Astrocyte of the spinal cord (primary cell): ENCODE measurements at regions of chr11 and their contacts with region 1.

Region 1: DNA sequence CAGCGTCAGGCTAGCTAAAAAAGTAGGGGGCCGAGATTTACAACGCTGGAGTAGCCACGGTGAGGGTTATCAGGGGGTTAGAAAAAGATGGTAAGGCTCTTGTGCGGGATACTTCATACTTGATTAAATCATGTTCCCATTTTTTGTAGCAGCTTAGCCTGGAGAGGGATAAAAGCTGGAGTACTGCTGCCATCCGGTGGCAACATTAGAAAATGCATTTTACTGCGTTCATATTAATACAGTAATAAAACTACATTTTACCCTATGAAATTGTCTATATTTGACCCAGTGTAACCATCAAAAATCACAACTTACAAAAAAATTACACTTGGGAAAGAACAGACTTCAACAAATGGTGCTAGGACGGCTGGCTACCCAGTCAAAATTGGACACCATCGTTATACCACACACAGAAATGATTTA is 17.3 kb downstream of the RPUSD4 start:
- DNase-seq: peak; percentile 45
- H3K4me3 ChIP-seq: no peak overlapping the region
- CTCF ChIP-seq: peak; percentile 52

Region 2: GRCh38 chr11:125887373-125888324 is 306.5 kb before region 1 on chr11 and contains the start of gene HYLS1:
- in situ Hi-C with region 1: no loop called
- DNase-seq: peak; percentile 99
- H3K4me3 ChIP-seq: peak within 1 kb of the TSS; percentile 63
- CTCF ChIP-seq: peak; percentile 11

Region 3: DNA sequence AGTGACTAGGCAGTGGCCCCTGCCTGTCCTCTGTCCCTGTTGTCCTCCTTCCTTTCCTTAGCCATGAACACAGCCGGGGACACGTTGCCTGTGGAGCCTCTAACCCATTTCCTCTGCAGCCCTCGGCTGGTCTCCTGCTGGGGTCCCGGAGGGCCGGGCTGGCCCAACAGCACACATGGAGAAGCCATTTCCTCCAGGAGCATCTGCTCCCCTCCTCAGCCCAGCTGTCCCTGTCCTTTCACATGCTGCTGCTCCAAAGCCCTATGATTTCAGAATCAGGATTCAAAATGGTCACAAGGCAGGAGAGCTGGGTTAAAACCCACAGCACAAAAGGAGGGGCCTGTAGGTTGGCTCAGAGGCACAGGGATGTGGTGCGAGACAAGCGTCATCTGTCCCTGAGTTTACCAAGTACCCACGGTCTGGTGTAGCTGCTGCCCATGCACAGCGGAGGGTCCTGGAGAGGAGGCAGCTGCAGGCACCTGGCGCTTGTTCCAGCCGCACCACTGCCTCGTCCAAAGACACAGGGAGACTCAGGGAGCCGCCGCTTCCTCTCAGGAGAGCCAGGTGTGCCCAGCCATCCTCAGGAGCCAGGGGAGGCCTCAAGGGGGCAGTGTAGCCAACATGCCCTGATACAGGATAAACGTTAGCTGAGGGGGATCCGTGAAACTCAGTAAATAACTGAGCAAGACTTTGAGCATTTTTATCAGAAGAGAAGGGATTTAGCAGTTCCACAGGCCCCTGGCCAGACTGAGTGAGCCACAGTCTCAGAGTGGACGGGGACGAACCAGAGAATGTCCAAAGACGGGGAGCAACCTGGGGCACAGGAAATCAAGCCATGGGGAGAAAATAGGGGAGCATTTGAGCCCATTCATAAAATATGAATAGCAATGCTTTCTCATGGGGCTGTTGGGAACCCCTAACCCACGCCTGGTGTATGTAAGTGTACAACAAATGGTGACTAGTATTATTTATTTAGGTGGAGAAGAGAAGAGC is 252.2 kb before region 1 on chr11:
- in situ Hi-C with region 1: loop called (anchors 25 kb)
- DNase-seq: peak; percentile 10
- H3K4me3 ChIP-seq: no peak overlapping the region
- CTCF ChIP-seq: peak; percentile 84

Region 4: GRCh38 chr11:126359431-126360416 is 165.6 kb after region 1 on chr11:
- in situ Hi-C with region 1: no loop called
- DNase-seq: peak; percentile 33
- H3K4me3 ChIP-seq: no peak overlapping the region
- CTCF ChIP-seq: peak; percentile 15